Activated naive CD8-positive, alpha-beta T cell treated with anti-CD3 and anti-CD28 coated beads, Interleukin-2, amount 10 ng/mL, durations not matched to agents 7 days and 5 days (primary cell): ENCODE measurements at regions of chrX and their contacts with region 1.

Region 1: DNA sequence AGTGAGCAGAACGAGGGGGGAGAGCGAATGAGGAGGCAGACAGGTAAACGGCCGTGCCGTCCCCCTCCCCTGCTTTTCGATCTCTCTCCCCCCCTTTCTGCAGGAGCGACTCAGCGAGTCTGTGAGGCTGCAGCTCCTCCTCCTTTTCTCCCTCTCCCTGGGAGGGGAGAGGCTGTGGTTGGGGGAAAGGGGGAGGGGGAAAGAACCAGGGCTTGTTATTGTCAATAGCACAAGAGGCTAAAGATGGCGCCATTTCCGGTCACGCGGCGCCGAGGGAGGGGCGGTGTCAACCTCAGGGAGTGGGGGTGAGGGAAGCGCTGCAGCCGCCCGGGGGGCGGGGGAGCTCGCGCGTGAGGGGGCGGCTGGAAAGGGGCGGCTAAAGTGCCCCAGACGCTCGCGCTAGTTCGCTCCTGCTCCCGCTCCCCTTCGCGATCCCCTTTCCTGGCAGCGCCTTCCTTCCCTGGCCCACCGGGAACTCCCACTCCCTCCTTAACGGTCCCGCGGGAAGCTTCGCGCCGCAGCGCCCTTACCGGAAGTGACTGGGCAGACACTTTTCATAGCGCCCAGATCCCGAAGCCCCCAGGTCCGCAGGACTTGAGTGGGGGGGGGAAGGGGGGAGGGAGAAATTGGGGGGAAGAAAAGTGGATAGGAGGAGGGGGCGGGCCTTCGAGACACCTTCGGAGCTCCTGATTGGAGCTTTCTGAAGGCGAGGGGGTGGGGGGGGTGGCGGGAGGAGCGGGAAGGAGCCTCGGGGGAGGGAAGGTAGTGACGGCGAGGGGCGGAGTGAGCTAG is at the start of gene CUL4B:
- DNase-seq: peak; percentile 86
- ATAC-seq: peak; percentile 86
- H3K4me3 Mint-ChIP-seq: peak within 1 kb of the TSS; percentile 100
- H3K27ac Mint-ChIP-seq: peak within 1 kb of the TSS; percentile 99
- H3K4me1 Mint-ChIP-seq: peaks cover 15% of the 10 kb centered on the region
- H3K27me3 Mint-ChIP-seq: no peaks in the 10 kb centered on the region
- total RNA-seq, gene CUL4B: 40.7 to 41.3 TPM

Region 2: GRCh38 chrX:120629667-120630537 is 68.9 kb after region 1 on chrX and contains the start of gene C1GALT1C1:
- POLR2A ChIA-PET with region 1: interaction called, 13 read pairs
- DNase-seq: peak; percentile 90
- ATAC-seq: peak; percentile 97
- H3K4me3 Mint-ChIP-seq: peak within 1 kb of the TSS; percentile 96
- H3K27ac Mint-ChIP-seq: peak within 1 kb of the TSS; percentile 98
- H3K4me1 Mint-ChIP-seq: peaks cover 11% of the 10 kb centered on the region
- H3K27me3 Mint-ChIP-seq: no peaks in the 10 kb centered on the region
- total RNA-seq, gene C1GALT1C1: 18.1 to 20.2 TPM